ENCODE measurements at regions of chr14 and their contacts with region 1.

Region 1: GRCh38 chr14:55562135-55562534 is 17.9 kb upstream of the KTN1 start:
- DNase-seq: no peak
- H3K4me3 ChIP-seq: no peak overlapping the region
- H3K27ac ChIP-seq: no peak overlapping the region
- H3K4me1 ChIP-seq: peaks cover 8% of the 10 kb centered on the region
- H3K27me3 ChIP-seq: no peaks in the 10 kb centered on the region
- CTCF ChIP-seq: no peak

Region 2: DNA sequence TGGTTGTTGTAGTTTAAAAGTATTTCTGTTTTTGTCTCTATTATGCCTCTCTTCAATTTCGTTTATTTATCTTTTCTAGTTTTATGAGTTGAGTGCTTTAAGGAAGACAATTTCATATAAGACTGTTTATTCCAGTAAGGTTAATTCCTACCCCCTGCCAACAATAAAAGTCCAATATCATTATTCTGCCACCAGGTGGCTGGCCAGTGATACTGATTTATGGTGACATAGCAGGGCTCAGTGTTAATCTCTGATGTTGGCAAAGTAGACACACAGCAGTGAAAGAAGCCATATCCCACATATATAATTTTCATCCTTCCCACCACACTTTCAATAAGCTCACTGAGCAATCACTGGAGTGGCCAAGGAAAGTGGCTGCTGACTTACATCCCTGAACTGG is 1536.5 kb before region 1 on chr14:
- CTCF ChIA-PET with region 1: no interaction called
- POLR2A ChIA-PET with region 1: no interaction called
- intact Hi-C with region 1: no loop called
- DNase-seq: no peak
- H3K4me3 ChIP-seq: no peak overlapping the region
- H3K27ac ChIP-seq: no peak overlapping the region
- H3K4me1 ChIP-seq: no peaks in the 10 kb centered on the region
- H3K27me3 ChIP-seq: no peaks in the 10 kb centered on the region
- CTCF ChIP-seq: peak; percentile 60

Region 3: DNA sequence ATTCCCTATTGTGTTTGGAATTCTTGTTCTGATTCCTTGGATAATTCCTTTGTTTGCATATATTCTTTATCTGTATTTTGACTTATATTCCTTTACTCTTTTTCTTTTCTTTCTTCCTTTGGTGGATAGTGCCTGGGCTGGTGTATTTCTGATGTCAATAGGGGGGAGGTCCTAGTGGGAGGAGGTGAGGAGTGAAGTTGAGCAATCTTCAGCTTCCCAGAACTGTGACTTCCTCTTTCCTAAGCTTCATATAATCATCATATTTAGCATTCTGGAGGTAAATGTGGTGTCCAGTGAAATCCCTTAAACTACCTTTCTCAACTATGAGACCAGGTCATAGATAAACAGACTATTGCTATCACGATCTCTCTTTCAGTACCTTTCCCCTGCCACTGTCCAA is 92.1 kb before region 1 on chr14:
- CTCF ChIA-PET with region 1: no interaction called
- POLR2A ChIA-PET with region 1: no interaction called
- intact Hi-C with region 1: no loop called
- DNase-seq: no peak
- H3K4me3 ChIP-seq: no peak overlapping the region
- H3K27ac ChIP-seq: no peak overlapping the region
- H3K4me1 ChIP-seq: no peaks in the 10 kb centered on the region
- H3K27me3 ChIP-seq: no peaks in the 10 kb centered on the region
- CTCF ChIP-seq: no peak

Region 4: DNA sequence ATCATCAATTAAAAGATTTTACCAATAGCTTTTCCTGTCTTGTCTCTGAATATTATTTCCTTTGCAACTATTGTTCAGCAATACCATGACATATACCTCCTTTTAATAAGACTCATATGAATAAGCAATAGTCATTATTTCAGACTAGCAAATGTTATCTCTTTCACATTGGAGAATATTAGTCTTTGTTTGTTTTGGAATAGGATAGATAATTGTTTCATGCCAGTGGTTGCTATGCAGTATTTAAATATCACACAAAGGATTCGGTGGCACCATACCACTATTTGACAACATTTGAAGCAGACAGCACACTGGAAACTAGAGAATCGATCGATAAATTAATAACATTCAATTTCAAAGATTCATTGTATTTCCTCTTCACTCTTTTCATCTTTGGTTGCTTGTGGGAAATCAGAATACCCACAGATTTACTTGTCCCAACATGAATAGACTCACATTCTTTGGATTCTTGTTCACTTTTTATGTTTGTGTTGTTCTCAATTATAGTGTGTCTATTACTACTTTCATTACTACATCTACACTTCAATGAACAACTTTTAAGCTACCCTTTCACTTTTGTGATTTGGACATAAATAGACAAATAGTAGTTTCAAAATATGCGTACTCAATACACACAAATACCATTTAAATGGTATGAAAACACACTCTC is 79.1 kb before region 1 on chr14:
- CTCF ChIA-PET with region 1: no interaction called
- POLR2A ChIA-PET with region 1: interaction called, 11 read pairs
- intact Hi-C with region 1: no loop called
- DNase-seq: no peak
- H3K4me3 ChIP-seq: no peak overlapping the region
- H3K27ac ChIP-seq: no peak overlapping the region
- H3K4me1 ChIP-seq: no peaks in the 10 kb centered on the region
- H3K27me3 ChIP-seq: no peaks in the 10 kb centered on the region
- CTCF ChIP-seq: no peak

Region 5: DNA sequence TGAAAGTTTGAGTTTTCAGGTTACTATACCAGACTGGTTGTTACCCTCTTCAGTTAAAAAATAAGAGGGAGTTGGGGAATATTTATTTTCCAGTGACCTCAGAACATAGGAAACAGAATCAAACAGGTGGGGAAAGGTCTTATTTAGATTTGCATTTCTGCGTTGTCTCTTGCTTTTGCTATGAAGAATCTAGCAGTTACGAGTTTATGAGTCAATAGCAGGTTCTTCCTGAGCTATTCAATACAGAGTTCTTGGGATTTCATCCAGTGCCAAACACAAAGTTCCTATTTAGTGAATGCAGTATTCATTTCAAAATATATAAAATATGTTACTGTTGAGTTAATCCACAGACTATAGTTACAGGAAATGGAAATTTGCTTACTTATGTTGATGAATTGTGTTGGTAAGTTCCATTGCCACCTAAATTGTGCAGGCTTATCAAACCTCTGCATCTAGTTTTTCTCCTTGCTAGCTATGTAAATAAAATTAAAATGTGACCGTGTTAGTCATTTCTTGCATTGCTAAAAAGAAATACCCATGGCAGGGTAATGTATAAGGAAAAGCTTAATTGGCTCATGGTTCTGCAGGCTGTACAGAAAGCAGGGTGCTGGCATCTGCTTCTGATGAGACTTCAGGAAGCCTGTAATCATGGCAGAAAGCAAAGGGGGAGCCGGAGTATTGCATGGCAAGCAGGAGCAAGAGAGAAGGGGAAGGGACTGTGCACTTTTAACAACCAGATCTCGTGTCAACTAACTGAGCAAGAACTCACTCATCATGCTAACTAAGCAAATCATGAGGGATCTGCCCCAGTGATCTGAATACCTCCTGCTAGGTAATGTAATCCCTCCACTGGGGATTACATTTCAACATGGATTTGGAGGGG is 128.1 kb after region 1 on chr14:
- CTCF ChIA-PET with region 1: no interaction called
- POLR2A ChIA-PET with region 1: no interaction called
- intact Hi-C with region 1: no loop called
- DNase-seq: peak in 1 of 2 experiments; percentile 46
- H3K4me3 ChIP-seq: no peak overlapping the region
- H3K27ac ChIP-seq: no peak overlapping the region
- H3K4me1 ChIP-seq: 0 out of 2 replicates have a peak, but pooled peaks cover 12% of the 10 kb centered on the region
- H3K27me3 ChIP-seq: no peaks in the 10 kb centered on the region
- CTCF ChIP-seq: no peak